ENCODE measurements at regions of chr18 and their contacts with region 1.

Region 1: GRCh38 chr18:23503038-23503962 is at the start of gene RMC1:
- DNase-seq: peak; percentile 81
- ATAC-seq: peak; percentile 85
- H3K4me3 ChIP-seq: peak within 1 kb of the TSS; percentile 79 to 92
- H3K27ac ChIP-seq: peak within 1 kb of the TSS; percentile 70
- H3K4me1 ChIP-seq: peaks cover 10 to 33% of the 10 kb centered on the region in 2 experiments; a peak in 3 of 4 replicates
- H3K27me3 ChIP-seq: no peaks in the 10 kb centered on the region
- CTCF ChIP-seq: no peak
- POLR2A ChIP-seq: peak; percentile 76
- RAD21 ChIP-seq: peak; percentile 23; the same call in 1 of the 2 replicates
- total RNA-seq, gene RMC1: 38.4 TPM

Region 2: GRCh38 chr18:22790545-22791309 is 712.6 kb before region 1 on chr18:
- CTCF ChIA-PET with region 1: no interaction called
- POLR2A ChIA-PET with region 1: no interaction called
- RAD21 ChIA-PET with region 1: no interaction called
- intact Hi-C with region 1: loop called (anchors 10 kb)
- DNase-seq: no peak
- ATAC-seq: no peak
- H3K4me3 ChIP-seq: no peak overlapping the region
- H3K27ac ChIP-seq: no peak overlapping the region
- H3K4me1 ChIP-seq: no peaks in the 10 kb centered on the region
- H3K27me3 ChIP-seq: no peaks in the 10 kb centered on the region
- CTCF ChIP-seq: no peak
- POLR2A ChIP-seq: no peak
- RAD21 ChIP-seq: no peak

Region 3: GRCh38 chr18:23131693-23132319 is 371.5 kb before region 1 on chr18:
- CTCF ChIA-PET with region 1: interaction called, 3 read pairs
- POLR2A ChIA-PET with region 1: no interaction called
- RAD21 ChIA-PET with region 1: no interaction called
- intact Hi-C with region 1: loop called (anchors 5 kb)
- DNase-seq: peak; percentile 73
- ATAC-seq: peak; percentile 43
- H3K4me3 ChIP-seq: no peak overlapping the region
- H3K27ac ChIP-seq: no peak overlapping the region
- H3K4me1 ChIP-seq: peaks cover 18 to 34% of the 10 kb centered on the region in 2 experiments
- H3K27me3 ChIP-seq: no peaks in the 10 kb centered on the region
- CTCF ChIP-seq: peak; percentile 71 to 83 (median 77)
- POLR2A ChIP-seq: no peak
- RAD21 ChIP-seq: peak; percentile 82

Region 4: GRCh38 chr18:23487738-23488570 is 15.3 kb before region 1 on chr18:
- CTCF ChIA-PET with region 1: interaction called, 11 read pairs
- POLR2A ChIA-PET with region 1: no interaction called
- RAD21 ChIA-PET with region 1: no interaction called
- intact Hi-C with region 1: no loop called
- DNase-seq: no peak
- ATAC-seq: no peak
- H3K4me3 ChIP-seq: no peak overlapping the region
- H3K27ac ChIP-seq: no peak overlapping the region
- H3K4me1 ChIP-seq: no peaks in the 10 kb centered on the region
- H3K27me3 ChIP-seq: no peaks in the 10 kb centered on the region
- CTCF ChIP-seq: no peak
- POLR2A ChIP-seq: no peak
- RAD21 ChIP-seq: no peak

Region 5: DNA sequence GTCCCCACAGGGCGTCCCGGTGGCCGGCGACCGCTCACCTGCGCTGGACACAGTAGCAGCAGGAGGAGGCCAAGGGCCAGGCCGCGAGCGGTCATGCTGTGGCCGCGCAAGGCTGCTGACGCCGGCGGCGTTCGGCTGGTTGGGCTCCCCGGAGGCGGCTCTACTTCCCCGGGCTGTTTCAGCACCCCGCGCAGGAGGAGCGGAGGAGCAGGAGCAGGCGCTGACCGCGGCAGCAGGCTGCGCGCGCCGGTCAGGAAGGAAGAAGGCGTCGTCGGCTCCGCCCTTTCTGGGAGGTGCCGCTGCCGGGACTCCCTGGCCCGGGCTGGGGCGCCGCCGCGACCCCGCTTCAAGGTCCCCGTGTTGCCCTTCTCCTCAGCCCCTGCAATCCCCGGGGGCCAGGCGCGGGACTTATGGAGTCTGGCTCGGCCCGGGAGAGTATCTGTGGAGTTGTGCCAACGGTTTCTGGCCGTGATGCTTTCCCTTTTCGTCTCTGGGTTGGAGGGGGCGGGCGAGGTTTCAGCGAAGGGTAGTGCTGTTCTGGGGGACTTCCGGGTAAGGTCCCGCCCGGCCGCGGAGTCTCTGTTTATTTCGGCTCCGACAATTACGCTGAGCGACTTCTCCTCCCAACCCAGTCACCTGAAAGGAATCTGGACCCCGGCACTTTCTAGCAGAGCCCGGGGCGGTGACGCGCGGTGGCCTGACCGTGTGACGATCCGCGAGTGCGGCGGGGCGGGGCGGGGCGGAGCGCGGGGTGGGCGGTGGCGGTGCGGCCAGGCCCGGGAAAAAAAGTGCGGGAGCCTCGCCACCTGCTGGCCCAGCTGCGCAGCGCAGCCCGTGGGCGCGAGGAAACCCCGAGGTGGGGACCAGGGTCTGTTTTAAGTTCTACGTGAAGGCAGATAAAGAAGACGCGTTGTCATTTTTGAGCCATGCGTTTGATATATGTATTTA is 83.2 kb after region 1 on chr18 and contains the start of gene NPC1:
- CTCF ChIA-PET with region 1: no interaction called
- POLR2A ChIA-PET with region 1: no interaction called
- RAD21 ChIA-PET with region 1: interaction called in 1 of 2 experiments, 3 read pairs
- intact Hi-C with region 1: loop called (anchors 5 kb)
- DNase-seq: peak; percentile 80
- ATAC-seq: peak; percentile 93
- H3K4me3 ChIP-seq: peak within 1 kb of the TSS; percentile 80 to 89
- H3K27ac ChIP-seq: peak within 1 kb of the TSS; percentile 95
- H3K4me1 ChIP-seq: peaks cover 8 to 23% of the 10 kb centered on the region in 2 experiments
- H3K27me3 ChIP-seq: no peaks in the 10 kb centered on the region
- CTCF ChIP-seq: peak; percentile 43 to 86 (median 72); a peak in 5 of 6 replicates
- POLR2A ChIP-seq: peak; percentile 52
- RAD21 ChIP-seq: peak; percentile 67
- total RNA-seq, gene NPC1: 51.6 TPM

Region 6: GRCh38 chr18:23740105-23740830 is 237.0 kb after region 1 on chr18:
- CTCF ChIA-PET with region 1: no interaction called
- POLR2A ChIA-PET with region 1: no interaction called
- RAD21 ChIA-PET with region 1: no interaction called
- intact Hi-C with region 1: no loop called
- DNase-seq: no peak
- ATAC-seq: no peak
- H3K4me3 ChIP-seq: no peak overlapping the region
- H3K27ac ChIP-seq: no peak overlapping the region
- H3K4me1 ChIP-seq: peaks cover 0 to 6% of the 10 kb centered on the region in 2 experiments; a peak in 2 of 4 replicates
- H3K27me3 ChIP-seq: no peaks in the 10 kb centered on the region
- CTCF ChIP-seq: no peak
- POLR2A ChIP-seq: no peak
- RAD21 ChIP-seq: no peak

Region 7: DNA sequence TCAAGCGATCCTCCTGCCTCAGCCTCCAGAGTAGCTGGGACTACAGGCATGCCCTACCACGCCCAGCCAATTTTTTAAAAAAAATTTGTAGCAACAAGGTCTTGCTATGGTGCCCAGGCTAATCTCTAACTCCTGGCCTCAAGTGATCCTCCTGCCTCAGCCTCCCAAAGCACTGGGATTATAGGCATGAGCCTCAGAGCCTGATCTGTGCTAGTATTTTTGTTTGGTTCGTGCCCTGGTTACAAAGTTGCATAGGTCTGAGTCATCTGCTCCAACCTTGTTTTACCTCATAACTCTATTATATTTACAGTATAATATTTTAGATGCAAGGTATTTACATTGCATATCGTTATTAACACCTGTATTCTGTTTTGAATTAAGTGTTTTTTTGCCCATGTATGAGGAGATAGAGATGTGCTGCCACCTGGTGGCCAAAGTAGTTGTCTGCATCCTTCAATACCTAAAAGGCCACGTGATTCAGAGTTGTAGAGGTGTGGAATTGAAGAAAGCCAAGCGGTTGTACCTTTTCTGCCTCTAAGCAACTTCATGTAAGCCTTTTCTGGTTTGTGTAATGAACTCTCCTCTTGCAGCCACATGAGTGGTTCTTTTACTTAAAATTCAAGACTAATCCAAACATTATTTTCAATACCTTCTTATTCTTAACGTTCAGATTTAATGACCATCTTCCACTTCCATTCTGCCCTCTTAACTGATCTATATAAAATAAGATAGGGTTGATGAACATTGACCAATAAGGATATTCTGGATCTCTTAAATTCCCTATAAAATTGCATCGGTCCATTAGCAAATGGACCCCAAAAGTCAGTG is 615.7 kb after region 1 on chr18:
- CTCF ChIA-PET with region 1: no interaction called
- POLR2A ChIA-PET with region 1: no interaction called
- RAD21 ChIA-PET with region 1: no interaction called
- intact Hi-C with region 1: loop called (anchors 10 kb)
- DNase-seq: peak; percentile 63
- ATAC-seq: peak; percentile 84
- H3K4me3 ChIP-seq: no peak overlapping the region
- H3K27ac ChIP-seq: no peak overlapping the region
- H3K4me1 ChIP-seq: peaks cover under 1% of the 10 kb centered on the region in 2 experiments; a peak in 3 of 4 replicates
- H3K27me3 ChIP-seq: no peaks in the 10 kb centered on the region
- CTCF ChIP-seq: peak; percentile 73 to 80 (median 76)
- POLR2A ChIP-seq: no peak
- RAD21 ChIP-seq: peak; percentile 90

Measured in HCT116 (cell line).